Common myeloid progenitor, CD34-positive (primary cell): ENCODE measurements at regions of chr4 and their contacts with region 1.

Region 1: DNA sequence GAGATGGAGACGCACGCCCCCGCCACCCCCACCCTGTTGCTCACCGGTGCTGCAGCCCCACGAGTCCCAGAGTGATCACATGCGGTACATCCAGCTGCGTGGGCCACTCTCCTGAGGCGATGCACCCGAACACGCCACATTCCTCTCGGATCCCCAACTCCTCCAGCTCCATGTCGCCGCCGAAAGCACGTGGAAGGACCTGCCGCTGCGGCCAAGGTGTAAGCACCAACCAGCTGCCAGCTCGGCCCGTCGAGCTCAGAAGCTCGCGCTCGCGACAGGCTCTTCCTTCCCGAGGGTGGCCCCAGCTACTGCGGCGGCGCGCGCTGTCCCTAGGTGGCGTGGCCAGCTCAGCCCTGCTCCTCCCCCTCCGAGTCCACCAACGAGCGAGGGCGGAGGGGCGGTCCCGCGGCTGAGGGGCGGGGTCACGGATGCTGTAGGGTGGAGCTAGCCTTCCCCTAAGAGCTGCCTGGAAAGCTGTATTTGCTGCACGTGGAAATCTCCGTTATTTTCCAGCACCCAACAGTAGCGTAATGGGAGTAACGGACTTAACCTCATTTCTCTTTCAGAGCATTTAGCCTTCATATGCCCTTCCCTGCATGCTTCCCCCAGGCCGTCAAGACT is at the start of gene PPAT:
- DNase-seq: peak; percentile 97 to 99 (median 99)
- H3K4me3 ChIP-seq: peak within 1 kb of the TSS; percentile 63 to 98 (median 89)
- H3K27ac ChIP-seq: peak within 1 kb of the TSS; percentile 40 to 84
- H3K4me1 ChIP-seq: peaks cover 11 to 43% (median 31%) of the 10 kb centered on the region in 4 experiments
- H3K27me3 ChIP-seq: no peaks in the 10 kb centered on the region

Region 2: DNA sequence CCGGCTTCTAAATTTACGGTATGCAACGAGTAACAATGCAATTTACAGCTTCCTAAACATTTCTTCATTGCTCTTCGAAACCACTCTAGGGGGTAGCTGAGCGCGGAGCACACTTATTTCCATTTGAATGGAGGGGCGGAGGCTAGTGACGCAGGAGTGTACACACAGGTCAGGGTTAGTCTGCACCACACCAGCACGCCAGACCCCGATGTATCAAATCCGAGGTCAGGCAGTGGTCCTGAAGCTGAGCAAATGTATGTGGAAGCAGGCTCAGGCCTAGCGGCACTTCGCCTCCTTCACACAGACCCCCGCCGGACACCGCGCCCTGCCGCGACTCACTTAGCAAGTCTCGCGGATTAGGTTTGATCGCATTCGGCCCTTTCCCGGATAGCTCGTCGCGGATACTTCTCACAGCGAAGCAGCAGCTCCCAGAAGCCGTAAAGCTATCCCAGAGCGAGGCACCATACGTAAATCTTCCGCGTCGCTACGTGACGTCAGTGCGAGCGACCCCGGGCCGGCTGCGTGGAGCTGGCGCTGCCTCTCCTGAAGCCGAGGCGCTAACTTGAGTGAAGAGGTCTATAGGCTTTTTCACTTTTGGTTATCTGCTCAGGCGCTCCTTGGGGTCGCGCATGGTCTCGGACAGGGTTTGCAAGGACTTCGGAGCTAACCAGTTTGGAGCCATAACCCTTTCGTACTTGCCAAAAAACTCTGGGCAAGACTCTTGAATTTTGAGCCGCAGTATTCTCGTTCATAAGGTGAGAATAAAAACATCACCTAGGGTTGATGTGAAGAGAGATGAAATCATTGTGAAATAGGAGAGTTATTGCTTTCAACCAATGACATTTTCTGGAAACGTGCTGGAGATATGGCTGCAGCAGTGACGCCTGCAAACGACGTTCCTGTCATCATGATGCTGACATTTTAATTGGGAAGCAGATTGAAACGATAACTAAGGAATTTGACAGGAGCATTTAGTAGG is 48.1 kb before region 1 on chr4 and contains the start of gene AASDH:
- CTCF ChIA-PET with region 1: interaction called, 3 read pairs
- POLR2A ChIA-PET with region 1: interaction called, 11 read pairs
- DNase-seq: peak; percentile 97 to 98 (median 98)
- H3K4me3 ChIP-seq: peak within 1 kb of the TSS; percentile 42 to 98 (median 84)
- H3K27ac ChIP-seq: peak within 1 kb of the TSS; percentile 84 to 95
- H3K4me1 ChIP-seq: peaks cover 6 to 20% (median 16%) of the 10 kb centered on the region in 4 experiments
- H3K27me3 ChIP-seq: no peaks in the 10 kb centered on the region